Activated CD4-positive, alpha-beta T cell treated with anti-CD3 and anti-CD28 coated beads for 36 hours (primary cell): ENCODE measurements at regions of chr16 and their contacts with region 1.

Region 1: GRCh38 chr16:17358846-17359245 is 111.9 kb downstream of the XYLT1 start:
- DNase-seq: no peak
- ATAC-seq: no peak
- H3K4me3 Mint-ChIP-seq: no peak overlapping the region
- H3K27ac Mint-ChIP-seq: peak overlapping the region; percentile 66
- H3K4me1 Mint-ChIP-seq: peaks cover 69% of the 10 kb centered on the region
- H3K27me3 Mint-ChIP-seq: no peaks in the 10 kb centered on the region

Region 2: DNA sequence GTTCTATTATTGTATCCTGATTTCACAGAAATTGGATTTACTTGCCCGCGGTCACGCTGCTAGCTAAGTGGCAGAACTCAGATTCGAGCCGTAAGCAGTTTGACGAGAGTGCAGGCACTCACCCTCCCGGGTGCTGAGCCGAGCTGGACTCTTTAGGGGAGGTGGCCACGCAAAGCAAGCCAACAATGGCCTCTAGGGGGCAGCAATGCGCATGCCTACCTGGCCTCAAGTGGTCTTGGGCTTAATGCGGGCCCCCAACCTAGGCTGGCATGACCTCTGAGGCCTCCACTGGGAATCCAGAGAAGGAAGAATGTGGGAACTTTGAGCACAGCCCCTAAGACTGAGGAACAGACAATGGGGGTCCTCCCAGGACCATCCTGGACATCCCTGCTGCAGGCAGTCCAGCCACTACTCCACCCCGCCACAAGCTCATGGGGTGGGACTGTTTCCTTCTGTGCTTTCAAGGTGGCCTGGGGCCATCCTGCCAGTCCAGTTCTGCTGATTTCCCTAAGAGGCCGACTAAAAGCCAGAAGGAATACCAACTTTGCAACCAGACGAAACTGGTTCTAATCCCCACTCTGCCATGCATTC is 164.6 kb before region 1 on chr16:
- CTCF ChIA-PET with region 1: no interaction called
- POLR2A ChIA-PET with region 1: no interaction called
- intact Hi-C with region 1: no loop called
- DNase-seq: peak; percentile 77
- ATAC-seq: peak; percentile 47
- H3K4me3 Mint-ChIP-seq: no peak overlapping the region
- H3K27ac Mint-ChIP-seq: no peak overlapping the region
- H3K4me1 Mint-ChIP-seq: no peaks in the 10 kb centered on the region
- H3K27me3 Mint-ChIP-seq: no peaks in the 10 kb centered on the region

Region 3: GRCh38 chr16:17346621-17347569 is 12.0 kb before region 1 on chr16:
- CTCF ChIA-PET with region 1: interaction called, 11 read pairs
- POLR2A ChIA-PET with region 1: no interaction called
- intact Hi-C with region 1: loop called in 1 of 2 experiments (anchors 1 kb)
- DNase-seq: peak; percentile 41
- ATAC-seq: peak; percentile 34
- H3K4me3 Mint-ChIP-seq: no peak overlapping the region
- H3K27ac Mint-ChIP-seq: peak overlapping the region; percentile 81
- H3K4me1 Mint-ChIP-seq: peaks cover 62% of the 10 kb centered on the region
- H3K27me3 Mint-ChIP-seq: no peaks in the 10 kb centered on the region